Posterior vena cava (tissue), 2 donors: ENCODE measurements at regions of chr4 and their contacts with region 1.

Region 1: DNA sequence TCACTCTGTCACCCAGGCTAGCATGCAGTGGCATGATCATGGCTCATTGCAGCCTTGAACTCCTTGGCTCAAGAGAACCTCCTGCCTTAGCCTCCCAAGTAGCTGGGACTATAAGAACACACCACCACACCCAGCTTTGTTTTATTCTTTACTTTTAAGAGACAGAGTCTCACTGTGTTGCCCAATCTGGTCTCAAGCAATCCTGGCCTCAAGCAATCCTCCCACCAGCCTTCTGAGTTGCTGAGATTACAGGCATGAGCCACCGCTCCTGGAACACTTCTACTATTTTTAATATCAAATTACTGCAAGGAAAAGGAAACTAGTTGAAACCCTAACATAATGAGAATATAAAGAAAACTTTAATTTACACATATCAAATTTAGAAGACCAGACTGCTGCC is 85.4 kb downstream of the FAM13A start:
- DNase-seq: no peak

Region 2: GRCh38 chr4:87220094-87220822 is 1751.3 kb before region 1 on chr4 and contains the start of gene KLHL8:
- intact Hi-C with region 1: no loop called
- DNase-seq: peak; percentile 95
- total RNA-seq, gene KLHL8: 11.3 to 15.5 TPM

Region 3: DNA sequence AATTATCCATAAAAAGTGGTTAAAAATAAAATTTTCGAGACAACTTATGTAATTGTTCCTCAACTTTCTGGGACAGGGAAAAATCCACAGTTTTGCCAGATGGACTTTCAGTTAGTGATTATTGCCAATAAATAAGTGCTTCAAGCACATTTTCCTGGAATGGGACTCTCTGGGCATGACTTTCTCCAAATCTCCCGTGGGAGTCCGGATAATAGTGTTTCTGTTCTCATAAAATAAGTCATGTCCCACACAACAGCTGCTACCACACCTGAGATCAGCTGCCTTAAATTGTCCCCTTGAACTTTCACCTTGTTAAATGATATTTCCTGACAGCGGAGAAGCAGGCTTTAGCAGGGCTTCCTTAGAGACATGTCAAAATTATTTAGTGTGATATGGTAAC is 140.5 kb before region 1 on chr4:
- intact Hi-C with region 1: loop called in 1 of 2 experiments (anchors 5 kb)
- DNase-seq: no peak

Region 4: DNA sequence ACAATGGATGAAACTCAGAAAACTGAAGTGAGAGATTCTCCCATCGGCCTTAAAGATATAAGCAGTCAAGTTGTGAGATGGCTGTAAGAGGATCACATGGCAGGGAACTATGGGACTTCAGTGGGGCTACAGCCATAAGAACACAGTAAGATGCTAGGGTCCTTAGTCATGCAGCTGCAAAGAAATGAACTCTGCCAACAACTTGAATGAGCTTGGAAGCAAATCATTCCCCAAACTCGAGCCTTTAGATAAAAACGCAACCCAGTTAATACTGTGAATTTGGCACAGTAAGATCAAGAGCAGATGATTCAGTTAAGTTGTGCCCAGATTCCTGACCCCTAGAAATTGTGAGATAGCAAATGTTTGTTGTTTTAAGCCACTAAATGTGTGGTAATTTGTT is 31.8 kb before region 1 on chr4:
- intact Hi-C with region 1: loop called in 1 of 2 experiments (anchors 1 kb)
- DNase-seq: no peak